Activated CD4-positive, alpha-beta T cell treated with anti-CD3 and anti-CD28 coated beads for 36 hours (primary cell): ENCODE measurements at regions of chr16 and their contacts with region 1.

Region 1: GRCh38 chr16:30395155-30395991 is at the start of gene ZNF48:
- DNase-seq: peak; percentile 67
- ATAC-seq: peak; percentile 61
- H3K4me3 Mint-ChIP-seq: peak within 1 kb of the TSS; percentile 81
- H3K27ac Mint-ChIP-seq: peak within 1 kb of the TSS; percentile 48
- H3K4me1 Mint-ChIP-seq: peaks cover 28% of the 10 kb centered on the region
- H3K27me3 Mint-ChIP-seq: no peaks in the 10 kb centered on the region
- total RNA-seq, gene ZNF48: 10.6 to 11.0 TPM

Region 2: GRCh38 chr16:30335598-30336474 is 59.5 kb before region 1 on chr16:
- CTCF ChIA-PET with region 1: no interaction called
- POLR2A ChIA-PET with region 1: no interaction called
- intact Hi-C with region 1: no loop called
- DNase-seq: peak; percentile 55
- ATAC-seq: peak; percentile 13
- H3K4me3 Mint-ChIP-seq: peak overlapping the region; percentile 87
- H3K27ac Mint-ChIP-seq: peak overlapping the region; percentile 73
- H3K4me1 Mint-ChIP-seq: peaks cover 22% of the 10 kb centered on the region
- H3K27me3 Mint-ChIP-seq: no peaks in the 10 kb centered on the region

Region 3: GRCh38 chr16:30417529-30418349 is 22.4 kb after region 1 on chr16:
- CTCF ChIA-PET with region 1: interaction called, 5 read pairs
- POLR2A ChIA-PET with region 1: no interaction called
- intact Hi-C with region 1: loop called (anchors 1 kb)
- DNase-seq: peak; percentile 94
- ATAC-seq: peak; percentile 92
- H3K4me3 Mint-ChIP-seq: peak overlapping the region; percentile 49
- H3K27ac Mint-ChIP-seq: no peak overlapping the region
- H3K4me1 Mint-ChIP-seq: peaks cover 31% of the 10 kb centered on the region
- H3K27me3 Mint-ChIP-seq: no peaks in the 10 kb centered on the region